ENCODE measurements at regions of chr4 and their contacts with region 1.

Region 1: DNA sequence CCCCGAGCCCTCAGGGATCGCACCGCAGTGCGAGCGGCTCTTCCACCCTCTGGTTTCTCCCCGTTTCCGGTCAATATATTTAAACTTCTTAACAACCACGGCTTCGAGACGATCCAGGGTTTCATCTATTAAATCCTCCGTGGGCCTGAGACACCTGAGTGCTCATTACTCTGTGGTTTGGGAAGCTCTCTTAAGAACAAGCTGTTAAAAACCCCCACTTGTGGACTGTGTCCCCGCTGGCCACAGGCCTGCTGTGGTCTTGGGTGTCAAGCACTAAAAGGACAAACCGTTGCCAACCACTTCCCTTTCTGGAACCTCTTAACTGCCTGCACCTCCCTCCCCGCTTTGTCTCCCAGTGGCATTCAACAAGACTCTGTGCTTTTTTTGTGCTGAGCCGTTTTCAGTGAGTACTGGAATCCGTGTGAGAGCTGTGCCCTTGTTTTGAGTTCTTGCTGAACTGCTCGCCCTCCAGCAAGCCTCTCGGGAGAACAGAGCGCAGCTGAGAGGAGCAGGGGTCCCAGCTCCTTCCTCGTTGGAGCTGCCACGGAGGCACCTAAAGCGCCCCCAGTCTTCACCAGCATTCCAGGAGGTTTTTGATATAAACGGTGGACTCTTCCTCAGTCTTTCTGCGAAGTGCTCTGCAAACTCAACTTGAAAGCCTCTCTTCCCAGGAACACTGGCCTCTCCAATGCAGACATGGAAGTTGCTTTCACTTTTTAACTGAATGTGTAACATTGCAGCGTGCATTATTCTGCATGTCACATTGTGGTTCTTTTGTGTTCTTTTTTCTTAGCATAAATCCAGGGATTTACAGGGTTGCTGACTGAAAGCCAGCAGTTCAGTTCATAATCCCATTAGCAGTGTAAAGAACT is 691 bp upstream of the IGFBP7 start:
- DNase-seq: peak; percentile 53 to 69 (median 65)
- ATAC-seq: peak; percentile 25 to 64 (median 56)
- H3K4me3 ChIP-seq: peak overlapping the region; percentile 69 to 100 (median 94)
- H3K27ac ChIP-seq: peak overlapping the region; percentile 94 to 99 (median 98)
- H3K4me1 ChIP-seq: peaks cover 0 to 46% (median 31%) of the 10 kb centered on the region in 12 donors
- H3K27me3 ChIP-seq: no peaks in the 10 kb centered on the region
- CTCF ChIP-seq: no peak
- POLR2A ChIP-seq: no peak

Region 2: DNA sequence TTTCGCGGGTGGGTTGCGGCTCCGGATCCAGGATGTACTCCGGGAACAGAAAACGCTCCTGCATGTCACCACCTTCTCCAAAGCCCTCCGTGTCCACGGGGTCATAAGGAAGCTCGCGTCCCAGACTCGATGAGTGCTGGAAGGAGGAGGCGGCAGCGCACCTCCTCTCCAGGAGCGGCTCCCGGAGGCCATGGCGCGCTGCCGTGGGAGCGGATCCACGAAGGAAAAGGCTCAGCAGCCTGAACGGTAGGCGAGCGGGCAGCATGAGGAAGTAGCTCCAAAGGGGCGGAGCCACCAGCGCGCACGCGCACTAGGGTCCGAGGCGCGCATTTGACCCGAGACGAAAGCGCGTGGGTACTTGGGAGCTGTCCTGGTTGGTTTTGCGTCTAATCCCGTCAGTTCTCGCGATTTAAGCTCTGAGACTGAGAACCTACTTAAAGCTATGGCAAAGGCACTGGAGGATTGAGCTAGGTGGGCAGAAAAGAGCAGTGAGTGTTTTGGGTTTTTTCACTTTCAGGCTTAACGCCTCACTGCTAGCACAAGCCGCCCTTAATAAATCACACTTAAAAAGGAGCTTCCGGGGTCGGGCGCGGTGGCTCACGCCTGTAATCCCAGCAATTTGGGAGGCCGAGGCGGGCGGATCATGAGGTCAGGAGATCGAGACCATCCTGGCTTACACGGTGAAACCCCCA is 133.4 kb before region 1 on chr4 and contains the start of gene NOA1:
- intact Hi-C with region 1: loop called in 1 of 10 experiments (anchors 5 kb)
- DNase-seq: peak; percentile 97 to 99 (median 98)
- ATAC-seq: peak; percentile 88 to 92 (median 90)
- H3K4me3 ChIP-seq: peak within 1 kb of the TSS; percentile 74 to 97 (median 93)
- H3K27ac ChIP-seq: peak within 1 kb of the TSS; percentile 69 to 97 (median 86)
- H3K4me1 ChIP-seq: peaks cover 5 to 63% (median 50%) of the 10 kb centered on the region in 12 donors
- H3K27me3 ChIP-seq: no peaks in the 10 kb centered on the region
- CTCF ChIP-seq: no peak
- POLR2A ChIP-seq: peak in 1 of 2 donors; percentile 82
- total RNA-seq, gene NOA1: 11.2 to 23.0 (median 12.2) TPM

Region 3: GRCh38 chr4:57037982-57038604 is 72.8 kb before region 1 on chr4:
- intact Hi-C with region 1: loop called in 9 of 10 experiments (anchors 1 to 5 kb)
- DNase-seq: peak; percentile 61 to 84 (median 67)
- ATAC-seq: peak; percentile 57 to 79 (median 66)
- H3K4me3 ChIP-seq: no peak overlapping the region
- H3K27ac ChIP-seq: peak overlapping the region in 3 of 12 donors; percentile 6 to 19 (median 18)
- H3K4me1 ChIP-seq: peaks cover 1 to 42% (median 19%) of the 10 kb centered on the region in 12 donors
- H3K27me3 ChIP-seq: no peaks in the 10 kb centered on the region
- CTCF ChIP-seq: peak; percentile 61 to 94 (median 82)
- POLR2A ChIP-seq: no peak

Region 4: GRCh38 chr4:57043347-57044251 is 67.3 kb before region 1 on chr4:
- intact Hi-C with region 1: loop called (anchors 1 to 5 kb)
- DNase-seq: peak in 4 of 5 donors; percentile 51 to 70 (median 62)
- ATAC-seq: peak; percentile 67 to 72 (median 70)
- H3K4me3 ChIP-seq: peak overlapping the region in 4 of 12 donors; percentile 3 to 22 (median 11)
- H3K27ac ChIP-seq: peak overlapping the region; percentile 73 to 94 (median 82)
- H3K4me1 ChIP-seq: peaks cover 11 to 86% (median 56%) of the 10 kb centered on the region in 12 donors
- H3K27me3 ChIP-seq: no peaks in the 10 kb centered on the region
- CTCF ChIP-seq: no peak
- POLR2A ChIP-seq: no peak

Region 5: GRCh38 chr4:57055886-57056285 is 55.0 kb before region 1 on chr4:
- intact Hi-C with region 1: loop called in 1 of 10 experiments (anchors 5 kb)
- DNase-seq: peak in 4 of 5 donors; percentile 44 to 65 (median 56)
- ATAC-seq: peak; percentile 45 to 78 (median 58)
- H3K4me3 ChIP-seq: peak overlapping the region in 2 of 12 donors; percentile 12 to 16
- H3K27ac ChIP-seq: peak overlapping the region; percentile 7 to 82 (median 68)
- H3K4me1 ChIP-seq: peaks cover 10 to 94% (median 72%) of the 10 kb centered on the region in 12 donors
- H3K27me3 ChIP-seq: no peaks in the 10 kb centered on the region
- CTCF ChIP-seq: no peak
- POLR2A ChIP-seq: no peak

Region 6: GRCh38 chr4:57074744-57075143 is 36.1 kb before region 1 on chr4:
- intact Hi-C with region 1: loop called in 1 of 10 experiments (anchors 5 kb)
- DNase-seq: no peak
- ATAC-seq: peak in 1 of 4 donors; percentile 2
- H3K4me3 ChIP-seq: no peak overlapping the region
- H3K27ac ChIP-seq: peak overlapping the region in 7 of 12 donors; percentile 5 to 59 (median 16)
- H3K4me1 ChIP-seq: peaks cover 7 to 93% (median 72%) of the 10 kb centered on the region in 12 donors
- H3K27me3 ChIP-seq: no peaks in the 10 kb centered on the region
- CTCF ChIP-seq: no peak
- POLR2A ChIP-seq: no peak

Measured in heart left ventricle (tissue), 16 donors.